ENCODE measurements at regions of chr19 and their contacts with region 1.

Region 1: DNA sequence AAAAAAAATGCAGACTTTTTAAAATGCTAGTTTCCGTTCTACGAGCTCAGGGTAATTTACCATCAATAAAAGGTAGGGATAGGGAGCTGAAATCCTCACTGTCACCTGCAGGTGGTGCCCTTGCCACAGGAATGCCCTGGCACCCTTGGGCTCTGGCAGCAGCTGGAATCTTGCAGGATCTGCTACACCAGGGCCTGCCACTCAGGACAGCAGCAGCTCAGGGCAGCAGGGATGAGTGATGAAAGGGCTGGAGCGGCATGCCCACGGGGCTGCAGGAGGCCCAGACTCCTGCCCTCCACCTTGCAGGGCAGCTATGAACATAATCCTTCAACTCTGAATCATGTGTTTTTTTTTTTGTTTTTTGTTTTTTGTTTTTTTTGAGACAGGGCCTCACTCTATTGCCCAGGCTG is 54.0 kb downstream of the GNG7 start:
- DNase-seq: peak; percentile 67 to 98 (median 85)

Region 2: GRCh38 chr19:2469102-2469914 is 179.2 kb before region 1 on chr19:
- intact Hi-C with region 1: no loop called
- DNase-seq: no peak

Region 3: GRCh38 chr19:2750808-2751443 is 102.4 kb after region 1 on chr19:
- intact Hi-C with region 1: loop called (anchors 1 kb)
- DNase-seq: no peak

Region 4: DNA sequence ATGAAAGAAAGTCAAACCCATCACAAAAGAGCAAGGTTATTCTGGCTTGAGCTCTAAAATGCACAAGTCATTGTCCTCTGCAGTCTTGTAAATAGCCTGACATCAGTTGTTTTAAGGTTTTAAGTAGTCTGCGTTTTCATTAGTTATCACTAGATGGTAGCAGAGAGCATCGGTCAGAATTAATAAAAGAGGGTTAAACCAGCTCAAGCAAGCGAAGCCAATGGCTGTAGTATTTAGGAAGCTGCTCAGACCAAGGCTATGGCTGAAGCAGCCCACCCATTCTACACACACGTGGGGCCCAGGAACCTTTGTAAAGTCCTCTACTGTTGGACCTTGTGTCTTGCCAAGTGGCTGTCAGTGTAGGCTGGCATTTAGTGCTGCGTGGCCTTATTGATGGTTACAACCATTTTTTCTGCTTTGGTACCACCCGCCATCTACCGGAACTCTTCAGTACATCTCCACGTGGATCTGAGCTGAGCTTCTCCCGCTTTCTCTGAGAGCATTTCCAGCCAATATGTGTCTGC is 238.9 kb after region 1 on chr19:
- intact Hi-C with region 1: loop called (anchors 5 kb)
- DNase-seq: peak in 3 of 10 donors; percentile 23 to 53 (median 23)